IMR-90 (cell line): ENCODE measurements at regions of chr13 and their contacts with region 1.

Region 1: DNA sequence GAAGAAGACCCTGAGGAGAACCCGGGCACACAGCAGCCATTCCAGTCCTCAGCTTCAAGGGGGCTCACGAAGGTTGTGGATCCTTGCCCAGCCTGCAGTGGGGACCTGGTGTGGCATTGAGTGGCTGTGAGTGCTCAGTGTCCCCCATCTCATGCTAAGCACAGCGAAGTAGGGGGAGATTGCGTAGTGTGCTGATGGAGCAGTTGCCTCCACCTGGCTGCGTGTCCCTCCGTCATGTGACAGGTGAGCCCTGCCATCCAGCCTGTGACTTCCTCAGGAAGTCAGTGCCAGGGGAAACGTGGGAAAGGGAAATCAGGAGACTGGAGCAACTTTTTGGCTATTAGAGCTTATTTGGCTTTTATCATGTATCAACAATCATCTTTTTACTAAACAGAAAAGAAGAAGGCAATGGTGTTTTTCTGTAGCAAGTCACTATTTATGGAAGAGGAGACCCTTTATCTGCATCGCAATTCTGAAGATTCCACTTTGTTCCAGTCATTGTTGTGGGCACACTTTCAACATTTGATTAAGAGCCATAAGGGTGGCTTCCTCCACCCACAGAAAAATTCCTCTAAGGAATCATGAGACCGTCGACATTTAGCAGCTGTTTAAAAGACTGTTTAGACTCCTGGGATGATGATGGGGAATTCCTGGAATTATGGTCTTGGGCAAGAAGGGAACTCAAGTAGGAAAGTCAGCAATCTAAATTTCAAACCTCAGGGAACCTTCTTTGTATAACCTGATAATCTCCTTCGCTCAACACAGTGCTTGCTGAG is 126.8 kb upstream of the SPATA13 start:
- DNase-seq: peak; percentile 92
- ATAC-seq: peak; percentile 38
- H3K4me3 ChIP-seq: no peak overlapping the region
- H3K27ac ChIP-seq: peak overlapping the region; percentile 99
- H3K4me1 ChIP-seq: peaks cover 28% of the 10 kb centered on the region
- H3K27me3 ChIP-seq: no peaks in the 10 kb centered on the region
- CTCF ChIP-seq: no peak
- POLR2A ChIP-seq: no peak
- RAD21 ChIP-seq: no peak

Region 2: GRCh38 chr13:23966691-23967615 is 66.8 kb before region 1 on chr13:
- CTCF ChIA-PET with region 1: no interaction called
- POLR2A ChIA-PET with region 1: no interaction called
- dilution Hi-C with region 1: no loop called
- in situ Hi-C with region 1: no loop called
- intact Hi-C with region 1: loop called (anchors 5 kb)
- DNase-seq: peak; percentile 15
- ATAC-seq: no peak
- H3K4me3 ChIP-seq: no peak overlapping the region
- H3K27ac ChIP-seq: no peak overlapping the region
- H3K4me1 ChIP-seq: 0 out of 2 replicates have a peak, but pooled peaks cover 2% of the 10 kb centered on the region
- H3K27me3 ChIP-seq: no peaks in the 10 kb centered on the region
- CTCF ChIP-seq: no peak
- POLR2A ChIP-seq: no peak
- RAD21 ChIP-seq: no peak

Region 3: GRCh38 chr13:24148399-24149305 is 114.9 kb after region 1 on chr13:
- CTCF ChIA-PET with region 1: no interaction called
- POLR2A ChIA-PET with region 1: no interaction called
- dilution Hi-C with region 1: no loop called
- in situ Hi-C with region 1: no loop called
- intact Hi-C with region 1: loop called (anchors 5 kb)
- DNase-seq: peak; percentile 99
- ATAC-seq: peak; percentile 92
- H3K4me3 ChIP-seq: no peak overlapping the region
- H3K27ac ChIP-seq: peak overlapping the region; percentile 91
- H3K4me1 ChIP-seq: peaks cover 25% of the 10 kb centered on the region
- H3K27me3 ChIP-seq: no peaks in the 10 kb centered on the region
- CTCF ChIP-seq: peak; percentile 46
- POLR2A ChIP-seq: no peak
- RAD21 ChIP-seq: peak; percentile 36

Region 4: DNA sequence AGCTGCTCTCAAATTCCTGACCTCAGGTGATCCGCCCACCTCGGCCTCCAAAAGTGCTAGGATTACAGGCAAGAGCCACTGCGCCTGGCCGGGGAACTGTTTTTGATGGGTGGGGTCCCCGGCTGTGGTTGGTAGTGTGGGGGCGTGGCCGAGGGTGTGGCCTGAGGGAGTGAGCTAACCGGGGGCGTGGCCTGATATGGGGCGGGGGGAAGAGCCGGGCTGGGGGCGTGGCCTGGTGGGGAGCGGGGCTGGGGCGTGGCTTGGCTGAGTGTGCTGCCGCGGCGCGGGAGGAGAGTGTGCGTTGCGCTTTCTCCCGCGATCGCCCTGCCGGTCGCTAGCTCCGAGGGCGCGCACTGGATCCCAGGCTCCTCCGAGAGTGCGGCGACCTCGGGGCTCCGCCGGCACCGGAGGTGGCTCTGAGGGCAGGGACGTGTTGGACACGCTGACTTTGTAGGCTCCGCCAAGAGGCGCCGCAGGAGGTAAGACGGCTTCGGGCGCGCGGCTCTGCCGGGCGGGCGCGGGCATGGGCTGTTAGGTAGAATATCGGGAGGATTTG is 126.8 kb after region 1 on chr13 and contains the start of gene SPATA13:
- CTCF ChIA-PET with region 1: no interaction called
- POLR2A ChIA-PET with region 1: no interaction called
- dilution Hi-C with region 1: no loop called
- in situ Hi-C with region 1: no loop called
- intact Hi-C with region 1: loop called (anchors 5 kb)
- DNase-seq: peak; percentile 84
- ATAC-seq: peak; percentile 93
- H3K4me3 ChIP-seq: peak within 1 kb of the TSS; percentile 94
- H3K27ac ChIP-seq: peak within 1 kb of the TSS; percentile 63
- H3K4me1 ChIP-seq: peaks cover 19% of the 10 kb centered on the region
- H3K27me3 ChIP-seq: no peaks in the 10 kb centered on the region
- CTCF ChIP-seq: no peak
- POLR2A ChIP-seq: peak; percentile 64; the same call in 1 of the 2 replicates
- RAD21 ChIP-seq: no peak
- total RNA-seq, gene SPATA13: 11.4 and 12.5 TPM in 2 replicates